HepG2 (cell line): ENCODE measurements at regions of chr4 and their contacts with region 1.

Region 1: GRCh38 chr4:152640058-152640833 is 39.6 kb downstream of the TMEM154 start:
- DNase-seq: no peak
- ATAC-seq: peak; percentile 67
- H3K4me3 ChIP-seq: no peak overlapping the region
- H3K27ac ChIP-seq: no peak overlapping the region
- H3K4me1 ChIP-seq: peaks cover 40% of the 10 kb centered on the region
- H3K27me3 ChIP-seq: no peaks in the 10 kb centered on the region
- CTCF ChIP-seq: peak; percentile 54
- EP300 ChIP-seq: no peak; a peak in 1 of 4 replicates
- POLR2A ChIP-seq: no peak
- RAD21 ChIP-seq: peak; percentile 44; the same call in 1 of the 2 replicates

Region 2: DNA sequence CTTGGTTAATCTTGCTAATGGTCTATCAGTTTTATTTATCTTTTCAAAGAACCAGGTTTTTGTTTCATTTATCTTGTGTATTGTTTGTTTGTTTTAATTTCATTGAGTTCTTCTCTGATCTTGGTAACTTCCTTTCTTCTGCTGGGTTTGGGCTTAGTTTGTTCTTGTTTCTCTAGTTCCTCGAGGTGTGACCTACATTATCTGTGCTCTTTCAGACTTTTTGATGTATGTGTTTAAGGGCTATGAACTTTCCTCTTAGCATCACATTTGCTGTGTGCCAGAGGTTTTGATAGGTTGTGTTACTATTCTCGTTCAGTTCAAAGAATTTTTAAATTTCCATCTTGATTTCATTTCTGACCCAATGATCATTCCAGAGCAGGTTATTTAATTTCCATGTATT is 514.0 kb before region 1 on chr4:
- CTCF ChIA-PET with region 1: no interaction called
- POLR2A ChIA-PET with region 1: no interaction called
- in situ Hi-C with region 1: no loop called
- intact Hi-C with region 1: no loop called
- DNase-seq: no peak
- ATAC-seq: no peak
- H3K4me3 ChIP-seq: no peak overlapping the region
- H3K27ac ChIP-seq: no peak overlapping the region
- H3K4me1 ChIP-seq: no peaks in the 10 kb centered on the region
- H3K27me3 ChIP-seq: no peaks in the 10 kb centered on the region
- CTCF ChIP-seq: no peak
- EP300 ChIP-seq: no peak
- POLR2A ChIP-seq: no peak
- RAD21 ChIP-seq: no peak

Region 3: DNA sequence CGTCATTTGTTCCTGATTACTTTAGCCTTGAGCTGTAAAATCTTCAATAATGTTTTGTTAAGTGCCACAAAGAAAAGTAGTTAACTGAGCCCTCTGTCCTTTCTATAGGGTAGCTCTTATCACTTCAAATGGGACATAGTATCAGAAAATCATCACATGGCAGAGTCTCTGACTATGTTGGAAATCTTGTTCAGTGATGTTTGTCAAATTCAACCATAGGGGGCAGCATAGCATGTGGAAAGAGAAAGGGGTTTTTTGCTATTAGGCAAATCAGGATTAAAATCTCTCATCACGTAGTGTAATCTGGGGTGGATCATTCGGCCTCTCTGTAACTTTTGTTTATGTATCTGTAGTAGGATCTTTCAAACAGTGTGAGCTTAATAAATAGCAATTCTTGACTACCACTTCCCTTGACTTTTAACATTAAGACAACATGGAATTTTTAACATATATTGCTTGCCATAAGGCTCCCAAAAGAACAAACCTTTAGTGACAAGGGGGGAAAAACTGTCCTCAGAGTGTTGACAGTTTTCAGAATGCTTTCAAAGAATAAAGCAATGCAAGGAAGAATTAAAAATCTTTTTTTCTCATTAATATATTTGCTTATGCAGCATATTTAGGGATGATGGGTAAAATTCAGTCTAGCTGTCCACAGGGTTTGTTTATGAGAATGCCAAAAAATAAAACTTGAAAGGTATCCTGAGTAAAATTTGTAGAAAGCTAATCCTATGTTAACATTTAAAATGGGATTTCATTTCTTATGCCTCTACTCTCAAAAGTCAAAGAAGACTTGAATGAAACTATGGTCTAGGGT is 231.5 kb before region 1 on chr4:
- CTCF ChIA-PET with region 1: interaction called, 11 read pairs
- POLR2A ChIA-PET with region 1: no interaction called
- in situ Hi-C with region 1: no loop called
- intact Hi-C with region 1: loop called (anchors 2 kb)
- DNase-seq: peak; percentile 37
- ATAC-seq: peak; percentile 56
- H3K4me3 ChIP-seq: no peak overlapping the region
- H3K27ac ChIP-seq: no peak overlapping the region
- H3K4me1 ChIP-seq: peaks cover under 1% of the 10 kb centered on the region; the same call in 1 of the 2 replicates
- H3K27me3 ChIP-seq: no peaks in the 10 kb centered on the region
- CTCF ChIP-seq: peak; percentile 68
- EP300 ChIP-seq: no peak
- POLR2A ChIP-seq: no peak
- RAD21 ChIP-seq: no peak

Region 4: DNA sequence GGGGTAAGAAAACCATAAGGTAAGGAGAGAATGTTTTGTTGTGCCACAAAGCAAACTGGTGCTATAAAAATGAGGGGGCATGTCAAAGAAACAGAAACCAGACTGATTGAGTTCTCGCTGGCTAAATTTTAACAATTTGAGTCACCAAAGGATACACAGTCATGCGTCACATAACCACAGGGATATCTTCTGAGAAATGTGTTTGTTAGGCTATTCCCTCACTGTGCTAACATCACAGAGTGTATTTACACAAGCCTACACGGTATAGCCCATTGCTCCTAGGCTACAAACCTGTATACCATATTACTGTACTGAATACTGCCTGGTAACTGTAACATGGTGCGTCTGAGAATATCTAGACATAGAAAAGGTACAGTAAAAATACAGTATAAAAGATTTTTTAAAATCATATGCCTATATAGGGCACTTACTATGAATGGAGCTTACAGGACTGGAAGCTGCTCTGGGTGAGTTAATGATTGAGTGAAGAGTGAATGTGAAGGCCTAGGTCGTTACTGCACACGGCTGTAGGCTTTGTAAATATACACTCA is 154.4 kb before region 1 on chr4:
- CTCF ChIA-PET with region 1: no interaction called
- POLR2A ChIA-PET with region 1: no interaction called
- in situ Hi-C with region 1: no loop called
- intact Hi-C with region 1: no loop called
- DNase-seq: peak; percentile 97
- ATAC-seq: peak; percentile 99
- H3K4me3 ChIP-seq: peak overlapping the region; percentile 35 to 68 (median 65); a peak in 4 of 6 replicates
- H3K27ac ChIP-seq: peak overlapping the region; percentile 92
- H3K4me1 ChIP-seq: peaks cover 74% of the 10 kb centered on the region
- H3K27me3 ChIP-seq: no peaks in the 10 kb centered on the region
- CTCF ChIP-seq: no peak
- EP300 ChIP-seq: peak in 1 of 2 experiments; percentile 82; a peak in 2 of 4 replicates
- POLR2A ChIP-seq: peak in 1 of 2 experiments; percentile 46; a peak in 1 of 4 replicates
- RAD21 ChIP-seq: no peak

Region 5: GRCh38 chr4:152585023-152585441 is 55.2 kb before region 1 on chr4:
- CTCF ChIA-PET with region 1: no interaction called
- POLR2A ChIA-PET with region 1: no interaction called
- in situ Hi-C with region 1: no loop called
- intact Hi-C with region 1: loop called (anchors 2 kb)
- DNase-seq: no peak
- ATAC-seq: peak; percentile 79
- H3K4me3 ChIP-seq: peak overlapping the region; percentile 34 to 50 (median 42); a peak in 5 of 6 replicates
- H3K27ac ChIP-seq: no peak overlapping the region
- H3K4me1 ChIP-seq: peaks cover 28% of the 10 kb centered on the region
- H3K27me3 ChIP-seq: peaks cover 0 to 6% of the 10 kb centered on the region in 2 experiments; a peak in 2 of 5 replicates
- CTCF ChIP-seq: no peak
- EP300 ChIP-seq: no peak
- POLR2A ChIP-seq: no peak
- RAD21 ChIP-seq: no peak

Region 6: GRCh38 chr4:152655272-152656129 is 15.3 kb after region 1 on chr4:
- CTCF ChIA-PET with region 1: no interaction called
- POLR2A ChIA-PET with region 1: no interaction called
- in situ Hi-C with region 1: no loop called
- intact Hi-C with region 1: no loop called
- DNase-seq: no peak
- ATAC-seq: peak; percentile 86
- H3K4me3 ChIP-seq: peak overlapping the region in 1 of 3 experiments; percentile 36; a peak in 1 of 6 replicates
- H3K27ac ChIP-seq: no peak overlapping the region
- H3K4me1 ChIP-seq: peaks cover 10% of the 10 kb centered on the region
- H3K27me3 ChIP-seq: no peaks in the 10 kb centered on the region
- CTCF ChIP-seq: no peak
- EP300 ChIP-seq: no peak
- POLR2A ChIP-seq: no peak
- RAD21 ChIP-seq: no peak

Region 7: GRCh38 chr4:152735396-152735859 is 95.2 kb after region 1 on chr4:
- CTCF ChIA-PET with region 1: no interaction called
- POLR2A ChIA-PET with region 1: no interaction called
- in situ Hi-C with region 1: no loop called
- intact Hi-C with region 1: loop called (anchors 2 kb)
- DNase-seq: no peak
- ATAC-seq: peak; percentile 42; the same call in 2 of the 3 replicates
- H3K4me3 ChIP-seq: no peak overlapping the region
- H3K27ac ChIP-seq: no peak overlapping the region
- H3K4me1 ChIP-seq: no peaks in the 10 kb centered on the region
- H3K27me3 ChIP-seq: peaks cover 0 to 9% of the 10 kb centered on the region in 2 experiments; a peak in 1 of 5 replicates
- CTCF ChIP-seq: peak; percentile 57
- EP300 ChIP-seq: no peak
- POLR2A ChIP-seq: no peak
- RAD21 ChIP-seq: peak; percentile 53; the same call in 1 of the 2 replicates